ENCODE measurements at regions of chr7 and their contacts with region 1.

Region 1: DNA sequence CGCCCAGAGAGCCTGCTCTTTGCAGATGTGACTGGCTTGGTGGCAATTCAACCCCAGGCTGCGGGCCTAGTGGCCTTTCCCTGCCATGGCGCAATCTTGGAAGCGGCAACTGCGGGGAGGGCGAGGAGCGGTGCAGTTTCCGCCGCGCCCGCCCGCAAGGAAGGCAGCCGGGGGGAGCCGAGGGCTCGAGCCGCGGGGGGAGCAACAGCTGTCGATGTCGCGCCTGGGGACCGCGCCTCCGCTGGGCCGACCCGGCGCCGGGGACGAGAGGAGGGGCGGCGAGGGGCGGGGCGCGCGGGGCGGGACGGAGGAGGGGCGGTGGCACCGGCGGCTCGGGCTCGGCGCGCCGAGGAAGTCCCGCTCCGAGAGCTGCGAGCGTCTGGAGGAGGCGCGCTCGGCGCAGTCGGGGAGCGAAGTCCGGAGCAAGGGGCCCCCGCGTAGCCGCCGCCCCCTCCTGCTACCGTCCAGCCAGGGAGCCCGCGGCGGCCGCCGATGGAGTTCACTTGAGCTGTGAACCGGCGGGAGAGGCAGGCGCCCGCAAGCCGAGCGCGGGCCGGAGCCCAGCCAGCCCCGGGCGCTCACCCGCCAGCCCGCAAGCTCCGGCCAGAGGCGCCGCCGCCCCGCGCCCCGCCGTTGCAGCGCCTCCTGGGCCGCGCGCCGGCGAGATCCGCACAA is 438.1 kb upstream of the GALNT17 start:
- DNase-seq: peak in 1 of 4 experiments; percentile 15
- ATAC-seq: no peak
- H3K4me3 ChIP-seq: no peak overlapping the region
- H3K27ac ChIP-seq: no peak overlapping the region
- H3K4me1 ChIP-seq: peaks cover 0 to 6% of the 10 kb centered on the region in 2 experiments; a peak in 1 of 5 replicates
- H3K27me3 ChIP-seq: peaks cover 4 to 5% of the 10 kb centered on the region in 2 experiments; a peak in 2 of 5 replicates
- CTCF ChIP-seq: no peak
- EP300 ChIP-seq: no peak
- POLR2A ChIP-seq: no peak
- RAD21 ChIP-seq: no peak

Region 2: DNA sequence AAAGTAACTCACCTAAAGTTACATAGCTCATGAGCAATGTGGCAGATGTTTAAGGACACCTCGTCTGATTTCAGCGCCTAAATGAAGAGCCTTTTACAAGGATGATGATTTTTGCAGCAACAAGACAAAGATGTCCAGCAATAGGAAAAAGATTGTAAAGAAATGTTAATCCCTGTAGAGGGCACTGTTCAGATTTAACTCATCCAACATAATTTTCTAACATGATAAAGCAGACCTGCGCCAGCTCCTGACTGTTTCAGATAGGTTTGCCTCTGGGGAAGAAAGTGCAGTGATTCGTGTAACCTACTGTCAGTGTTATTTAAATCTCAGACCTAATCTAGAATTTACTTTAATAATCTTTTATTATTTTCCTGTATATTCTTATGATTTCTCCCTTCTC is 500.3 kb before region 1 on chr7:
- CTCF ChIA-PET with region 1: no interaction called
- POLR2A ChIA-PET with region 1: no interaction called
- in situ Hi-C with region 1: no loop called
- intact Hi-C with region 1: loop called (anchors 10 kb)
- DNase-seq: peak in 1 of 4 experiments; percentile 3
- ATAC-seq: no peak
- H3K4me3 ChIP-seq: no peak overlapping the region
- H3K27ac ChIP-seq: no peak overlapping the region
- H3K4me1 ChIP-seq: no peaks in the 10 kb centered on the region
- H3K27me3 ChIP-seq: no peaks in the 10 kb centered on the region
- CTCF ChIP-seq: peak in 2 of 3 experiments; percentile 23 to 28; a peak in 1 of 6 replicates
- EP300 ChIP-seq: no peak
- POLR2A ChIP-seq: no peak
- RAD21 ChIP-seq: no peak

Region 3: DNA sequence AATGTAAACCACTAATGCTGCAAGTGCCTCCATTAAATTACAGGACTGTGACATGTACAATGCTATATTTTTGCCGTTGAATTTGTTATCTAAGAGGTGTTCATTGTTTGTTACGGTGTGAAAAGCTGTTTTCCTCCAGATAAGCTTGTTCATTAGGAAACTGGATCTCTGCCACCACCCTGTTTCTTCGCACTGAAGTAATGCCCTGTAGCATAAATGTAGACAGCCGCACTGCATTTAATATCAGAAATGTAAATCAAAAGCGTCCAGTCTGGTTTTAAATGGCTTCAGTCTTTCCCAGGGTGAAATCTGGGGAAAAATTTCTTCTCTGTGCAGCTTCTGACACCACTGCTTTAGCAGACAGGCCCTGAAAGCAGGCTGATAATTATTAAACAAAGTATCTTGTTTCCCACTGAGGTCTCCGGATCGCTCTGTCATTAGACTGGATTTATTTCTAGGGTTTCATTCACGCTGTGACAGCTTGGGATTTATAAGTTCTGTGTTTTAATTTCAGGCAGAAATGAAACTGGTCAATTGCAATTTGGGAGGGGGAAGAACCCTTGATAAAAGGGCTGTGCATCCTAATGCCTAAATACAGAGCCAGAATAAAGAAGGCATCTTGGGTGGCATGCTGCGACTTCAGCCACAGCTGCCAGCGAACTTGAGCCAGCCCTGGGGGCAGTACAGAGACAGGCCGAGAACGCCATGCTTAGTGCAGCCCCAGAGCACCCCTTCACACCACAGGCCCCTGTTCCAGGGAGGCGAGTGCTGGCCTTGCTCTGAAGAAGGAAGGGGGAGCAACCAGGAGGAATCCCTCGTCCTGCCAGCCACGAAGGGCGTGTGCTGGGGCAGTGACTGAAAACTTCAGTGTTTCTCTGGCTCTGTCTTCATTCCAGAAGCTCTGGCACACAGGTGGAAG is 109.6 kb before region 1 on chr7:
- CTCF ChIA-PET with region 1: no interaction called
- POLR2A ChIA-PET with region 1: no interaction called
- in situ Hi-C with region 1: no loop called
- intact Hi-C with region 1: loop called (anchors 5 kb)
- DNase-seq: peak in 3 of 4 experiments; percentile 12 to 32 (median 24)
- ATAC-seq: no peak
- H3K4me3 ChIP-seq: no peak overlapping the region
- H3K27ac ChIP-seq: no peak overlapping the region
- H3K4me1 ChIP-seq: no peaks in the 10 kb centered on the region
- H3K27me3 ChIP-seq: peaks cover 12 to 22% of the 10 kb centered on the region in 2 experiments
- CTCF ChIP-seq: no peak
- EP300 ChIP-seq: no peak
- POLR2A ChIP-seq: no peak
- RAD21 ChIP-seq: no peak

Region 4: GRCh38 chr7:71272509-71273490 is 579.0 kb after region 1 on chr7:
- CTCF ChIA-PET with region 1: no interaction called
- POLR2A ChIA-PET with region 1: no interaction called
- in situ Hi-C with region 1: no loop called
- intact Hi-C with region 1: no loop called
- DNase-seq: no peak
- ATAC-seq: no peak
- H3K4me3 ChIP-seq: no peak overlapping the region
- H3K27ac ChIP-seq: no peak overlapping the region
- H3K4me1 ChIP-seq: no peaks in the 10 kb centered on the region
- H3K27me3 ChIP-seq: no peaks in the 10 kb centered on the region
- CTCF ChIP-seq: no peak
- EP300 ChIP-seq: no peak
- POLR2A ChIP-seq: no peak
- RAD21 ChIP-seq: no peak

Region 5: DNA sequence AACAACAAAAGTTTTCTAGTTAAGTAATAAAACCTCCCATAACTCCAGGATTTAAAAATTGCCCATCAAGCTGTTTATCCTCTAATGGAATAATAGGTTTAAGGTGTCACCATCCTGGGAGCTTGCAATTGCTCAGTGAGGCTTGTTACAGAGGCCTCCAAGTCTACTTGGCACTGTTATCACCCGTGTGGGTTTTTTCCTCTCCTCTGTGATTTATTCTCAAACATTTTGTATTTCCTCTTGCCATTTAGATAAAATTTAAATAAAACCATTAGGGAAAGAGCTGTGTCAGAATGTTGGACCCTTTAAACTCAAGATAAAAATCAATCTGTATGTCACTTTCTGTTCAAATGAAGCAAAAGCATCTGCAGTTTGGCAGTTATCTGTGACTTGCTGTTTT is 640.7 kb after region 1 on chr7:
- CTCF ChIA-PET with region 1: no interaction called
- POLR2A ChIA-PET with region 1: no interaction called
- in situ Hi-C with region 1: no loop called
- intact Hi-C with region 1: no loop called
- DNase-seq: no peak
- ATAC-seq: no peak
- H3K4me3 ChIP-seq: no peak overlapping the region
- H3K27ac ChIP-seq: no peak overlapping the region
- H3K4me1 ChIP-seq: no peaks in the 10 kb centered on the region
- H3K27me3 ChIP-seq: no peaks in the 10 kb centered on the region; a peak in 1 of 5 replicates
- CTCF ChIP-seq: no peak
- EP300 ChIP-seq: no peak
- POLR2A ChIP-seq: no peak
- RAD21 ChIP-seq: no peak

Measured in K562 (cell line).